Head of caudate nucleus (tissue), 42 donors: ENCODE measurements at regions of chr17 and their contacts with region 1.

Region 1: DNA sequence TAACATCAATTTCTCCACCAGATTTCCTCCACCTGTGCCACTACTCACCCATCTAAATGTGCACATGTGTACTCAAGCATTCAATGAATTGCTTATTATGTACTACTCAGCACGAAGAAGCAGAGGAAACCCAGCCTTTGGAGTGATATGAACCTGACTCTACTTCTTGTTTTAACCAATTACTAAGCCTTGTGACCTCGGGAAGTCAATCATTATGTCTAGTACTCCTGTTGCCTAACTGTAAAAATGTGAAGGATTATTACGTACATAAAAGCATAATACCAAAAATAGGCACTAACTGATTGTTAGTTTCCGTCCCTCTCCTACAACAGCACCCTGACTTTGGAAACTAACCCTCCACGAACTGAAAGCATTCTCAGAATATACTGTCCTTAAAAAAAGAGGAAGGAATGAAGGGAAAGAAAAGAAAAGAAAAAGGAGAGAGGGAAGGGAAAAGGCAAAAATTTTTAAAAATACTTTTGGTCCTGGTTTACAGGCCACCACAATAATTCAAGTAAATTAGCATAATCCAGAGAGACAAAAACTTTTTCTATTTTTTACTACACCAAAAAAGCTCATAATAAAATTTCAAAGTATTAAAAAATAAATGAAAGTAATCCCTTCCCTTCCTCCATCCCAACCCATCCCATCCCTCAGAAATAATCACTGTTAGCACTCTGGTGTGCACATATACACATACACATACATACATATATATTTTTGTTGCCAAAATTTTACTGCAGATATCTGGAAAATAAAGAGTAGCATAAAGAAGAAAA is 53.6 kb downstream of the KANSL1 start:
- DNase-seq: no peak

Region 2: DNA sequence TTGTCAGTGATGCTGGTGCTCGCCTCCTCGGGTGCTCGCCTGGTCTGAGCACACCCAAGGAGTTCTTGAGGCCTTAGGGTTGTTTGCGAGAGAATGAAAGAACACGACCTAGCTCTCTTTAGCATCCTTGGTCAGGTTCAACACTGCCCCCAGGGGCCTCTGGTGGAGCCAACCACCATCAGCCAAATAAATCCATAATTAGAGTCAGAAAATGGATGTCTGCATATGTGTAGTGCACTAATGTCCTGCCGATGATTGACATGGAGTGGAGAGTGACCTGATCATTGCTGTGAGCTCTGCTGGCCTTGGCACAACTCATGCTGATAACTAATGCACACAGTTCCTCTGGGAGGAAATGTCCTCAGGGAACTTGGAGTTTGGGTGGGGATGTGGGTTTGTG is 148.7 kb before region 1 on chr17:
- intact Hi-C with region 1: no loop called
- DNase-seq: no peak

Region 3: DNA sequence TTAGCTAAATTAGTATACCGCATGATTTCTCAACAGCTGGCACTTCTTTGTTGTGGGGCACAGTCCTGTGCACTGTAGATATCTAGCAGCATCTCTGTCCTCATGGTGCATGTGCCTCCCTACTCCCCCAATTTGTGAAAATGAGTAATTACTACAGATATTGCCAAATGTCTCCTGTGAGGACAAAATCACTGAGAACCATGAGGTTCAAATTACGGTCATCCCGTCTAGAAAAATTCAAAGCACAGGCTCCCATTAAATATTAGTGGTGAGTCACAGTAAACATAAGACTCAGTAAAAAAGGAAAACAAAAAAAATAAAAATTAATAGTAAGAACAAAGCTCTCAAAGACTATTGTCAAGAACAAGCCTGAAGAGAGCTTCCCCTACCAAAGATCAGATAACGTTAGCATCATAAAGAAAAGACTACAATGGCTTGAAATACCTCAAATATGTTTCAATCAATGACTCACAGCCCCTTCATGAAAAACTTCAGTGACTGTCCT is 82.8 kb before region 1 on chr17:
- intact Hi-C with region 1: loop called (anchors 2 kb)
- DNase-seq: no peak

Region 4: DNA sequence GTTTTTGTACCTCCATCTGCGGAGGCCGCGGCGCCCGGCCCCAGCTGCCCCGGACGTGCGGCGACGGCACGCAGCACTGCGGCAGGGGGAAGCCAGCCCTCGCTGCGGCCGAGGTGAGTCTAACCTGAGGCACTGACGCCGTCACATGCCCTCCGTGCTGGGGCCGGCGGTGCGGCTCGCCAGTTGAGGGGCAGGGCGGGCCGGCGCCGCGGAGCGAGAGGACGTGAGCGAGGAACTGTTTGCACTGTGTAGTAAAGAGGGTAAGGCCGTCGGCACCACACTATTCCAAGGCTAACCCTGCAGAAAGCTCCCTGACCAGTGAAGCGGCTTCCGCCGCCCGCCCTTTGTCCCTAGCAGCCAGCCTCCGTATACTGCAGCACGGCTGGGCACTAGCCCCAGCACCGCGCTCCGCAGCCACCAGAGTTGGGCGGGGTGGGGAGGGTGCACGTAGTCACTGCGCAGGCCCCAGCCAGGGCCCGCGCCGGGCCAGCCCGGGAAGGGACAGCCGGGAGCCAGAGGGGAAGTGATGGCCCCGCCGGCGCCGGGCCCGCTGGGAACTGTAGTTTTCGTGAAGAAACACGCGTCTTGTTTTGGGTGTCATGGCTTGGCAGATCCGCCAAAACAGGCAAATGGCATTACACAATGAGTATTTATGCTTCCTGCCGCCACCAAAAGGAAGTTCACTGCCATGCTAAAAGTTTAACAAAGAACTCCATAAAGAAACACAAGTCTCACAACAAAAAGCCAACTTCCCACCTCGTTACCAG is 54.2 kb after region 1 on chr17:
- intact Hi-C with region 1: loop called (anchors 5 kb)
- DNase-seq: peak; percentile 89 to 99 (median 97)

Region 5: GRCh38 chr17:46832945-46833839 is 693.6 kb after region 1 on chr17:
- intact Hi-C with region 1: loop called (anchors 5 kb)
- DNase-seq: peak in 19 of 42 donors; percentile 16 to 78 (median 44)